Activated CD4-positive, alpha-beta T cell treated with anti-CD3 and anti-CD28 coated beads, Interleukin-2, amount 10 ng/mL, durations not matched to agents 7 days and 5 days (primary cell): ENCODE measurements at regions of chr22 and their contacts with region 1.

Region 1: GRCh38 chr22:35552196-35552842 is 11.7 kb downstream of the RASD2 start:
- DNase-seq: peak; percentile 94
- H3K4me3 Mint-ChIP-seq: peak overlapping the region; percentile 2
- H3K27ac Mint-ChIP-seq: peak overlapping the region; percentile 87
- H3K4me1 Mint-ChIP-seq: peaks cover 18% of the 10 kb centered on the region
- H3K27me3 Mint-ChIP-seq: peaks cover 7% of the 10 kb centered on the region

Region 2: GRCh38 chr22:35538775-35539321 is 13.5 kb before region 1 on chr22:
- CTCF ChIA-PET with region 1: interaction called, 11 read pairs
- POLR2A ChIA-PET with region 1: no interaction called
- DNase-seq: peak; percentile 14
- H3K4me3 Mint-ChIP-seq: no peak overlapping the region
- H3K27ac Mint-ChIP-seq: no peak overlapping the region
- H3K4me1 Mint-ChIP-seq: peaks cover 4% of the 10 kb centered on the region
- H3K27me3 Mint-ChIP-seq: peaks cover 38% of the 10 kb centered on the region